ENCODE measurements at regions of chr1 and their contacts with region 1.

Region 1: DNA sequence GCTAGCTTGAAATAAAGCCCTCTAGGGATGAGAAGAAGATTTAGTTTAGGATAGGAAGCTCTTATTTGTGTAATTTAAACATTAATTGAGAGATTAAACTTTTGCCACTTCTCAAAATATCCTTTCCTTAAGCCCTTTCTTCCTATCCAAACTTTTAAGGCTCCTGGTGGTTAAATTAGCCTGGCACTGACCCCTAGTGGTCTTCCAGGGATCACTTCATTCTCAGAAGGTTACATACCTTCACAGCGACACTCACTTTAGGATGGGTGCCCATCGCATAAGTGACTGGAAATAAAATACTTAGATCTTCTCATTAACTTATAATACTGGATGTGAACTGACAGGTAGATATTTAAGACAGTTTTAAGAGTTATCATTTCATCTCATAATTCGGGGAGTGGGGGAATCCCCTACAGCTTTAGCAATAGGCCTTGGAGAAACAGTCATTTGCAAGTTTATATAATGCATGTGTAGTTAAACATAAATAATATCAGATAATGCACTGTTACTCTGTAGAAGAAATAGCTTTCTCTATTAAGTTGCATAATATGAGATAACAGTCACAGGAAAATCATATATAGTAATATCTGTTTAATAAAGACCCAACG is 7.4 kb downstream of the LHX9 start:
- DNase-seq: peak in 5 of 14 experiments; percentile 34 to 73 (median 52)
- ATAC-seq: peak; percentile 77
- H3K4me3 ChIP-seq: no peak overlapping the region
- H3K4me3 Mint-ChIP-seq: no peak overlapping the region
- H3K27ac ChIP-seq: no peak overlapping the region
- H3K27ac Mint-ChIP-seq: no peak overlapping the region
- H3K4me1 ChIP-seq: peaks cover 21% of the 10 kb centered on the region
- H3K4me1 Mint-ChIP-seq: peaks cover 24% of the 10 kb centered on the region
- H3K27me3 ChIP-seq: peaks cover 58 to 73% of the 10 kb centered on the region in 2 experiments
- H3K27me3 Mint-ChIP-seq: peaks cover 92% of the 10 kb centered on the region
- CTCF ChIP-seq: peak; percentile 81

Region 2: DNA sequence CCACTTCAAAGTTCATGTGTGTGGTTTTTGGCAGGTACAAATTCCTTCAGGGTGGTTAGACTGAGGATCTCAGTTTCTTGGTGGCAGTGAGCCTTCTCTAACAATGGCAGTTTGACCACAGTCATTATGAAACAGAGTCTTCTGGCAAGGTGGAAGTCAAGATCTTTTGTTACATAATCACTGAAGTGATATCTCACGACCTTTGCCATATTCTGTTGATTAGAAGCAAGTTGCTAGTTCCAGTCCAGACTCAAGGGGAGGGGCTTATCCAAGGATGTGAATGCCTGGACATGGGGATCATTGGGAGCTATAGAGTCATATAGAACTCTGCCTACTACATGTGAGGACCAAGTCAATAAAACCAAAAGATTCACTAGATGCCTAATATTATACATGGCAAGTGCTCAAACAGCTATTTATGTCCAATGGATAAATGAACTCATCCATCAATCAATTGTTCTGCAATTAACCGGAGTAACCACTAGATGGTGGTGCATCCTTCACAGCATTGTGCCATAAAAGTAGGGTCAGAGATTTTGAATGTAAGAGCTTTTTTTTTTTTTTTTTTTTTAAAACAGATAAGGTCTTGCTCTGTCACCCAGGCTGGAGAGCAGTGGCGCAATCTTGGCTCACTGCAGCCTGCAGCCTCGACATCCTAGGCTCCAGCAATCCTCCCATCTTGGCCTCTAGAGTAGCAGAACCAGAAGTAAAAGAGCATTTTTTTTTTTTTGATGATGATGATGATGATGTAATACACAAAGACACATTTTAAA is 524.7 kb before region 1 on chr1:
- CTCF ChIA-PET with region 1: no interaction called
- POLR2A ChIA-PET with region 1: no interaction called
- intact Hi-C with region 1: loop called (anchors 10 kb)
- DNase-seq: peak in 5 of 14 experiments; percentile 7 to 67 (median 48)
- ATAC-seq: peak; percentile 81
- H3K4me3 ChIP-seq: no peak overlapping the region
- H3K4me3 Mint-ChIP-seq: no peak overlapping the region
- H3K27ac ChIP-seq: no peak overlapping the region
- H3K27ac Mint-ChIP-seq: no peak overlapping the region
- H3K4me1 ChIP-seq: no peaks in the 10 kb centered on the region
- H3K4me1 Mint-ChIP-seq: no peaks in the 10 kb centered on the region
- H3K27me3 ChIP-seq: no peaks in the 10 kb centered on the region
- H3K27me3 Mint-ChIP-seq: peaks cover 15% of the 10 kb centered on the region
- CTCF ChIP-seq: peak; percentile 59

Region 3: GRCh38 chr1:197526736-197527371 is 397.8 kb before region 1 on chr1:
- CTCF ChIA-PET with region 1: interaction called, 3 read pairs
- POLR2A ChIA-PET with region 1: no interaction called
- intact Hi-C with region 1: loop called (anchors 1 to 2 kb)
- DNase-seq: peak in 3 of 14 experiments; percentile 40 to 59 (median 52)
- ATAC-seq: peak; percentile 43
- H3K4me3 ChIP-seq: no peak overlapping the region
- H3K4me3 Mint-ChIP-seq: no peak overlapping the region
- H3K27ac ChIP-seq: no peak overlapping the region
- H3K27ac Mint-ChIP-seq: no peak overlapping the region
- H3K4me1 ChIP-seq: no peaks in the 10 kb centered on the region
- H3K4me1 Mint-ChIP-seq: no peaks in the 10 kb centered on the region
- H3K27me3 ChIP-seq: no peaks in the 10 kb centered on the region
- H3K27me3 Mint-ChIP-seq: no peaks in the 10 kb centered on the region
- CTCF ChIP-seq: peak; percentile 87

Region 4: DNA sequence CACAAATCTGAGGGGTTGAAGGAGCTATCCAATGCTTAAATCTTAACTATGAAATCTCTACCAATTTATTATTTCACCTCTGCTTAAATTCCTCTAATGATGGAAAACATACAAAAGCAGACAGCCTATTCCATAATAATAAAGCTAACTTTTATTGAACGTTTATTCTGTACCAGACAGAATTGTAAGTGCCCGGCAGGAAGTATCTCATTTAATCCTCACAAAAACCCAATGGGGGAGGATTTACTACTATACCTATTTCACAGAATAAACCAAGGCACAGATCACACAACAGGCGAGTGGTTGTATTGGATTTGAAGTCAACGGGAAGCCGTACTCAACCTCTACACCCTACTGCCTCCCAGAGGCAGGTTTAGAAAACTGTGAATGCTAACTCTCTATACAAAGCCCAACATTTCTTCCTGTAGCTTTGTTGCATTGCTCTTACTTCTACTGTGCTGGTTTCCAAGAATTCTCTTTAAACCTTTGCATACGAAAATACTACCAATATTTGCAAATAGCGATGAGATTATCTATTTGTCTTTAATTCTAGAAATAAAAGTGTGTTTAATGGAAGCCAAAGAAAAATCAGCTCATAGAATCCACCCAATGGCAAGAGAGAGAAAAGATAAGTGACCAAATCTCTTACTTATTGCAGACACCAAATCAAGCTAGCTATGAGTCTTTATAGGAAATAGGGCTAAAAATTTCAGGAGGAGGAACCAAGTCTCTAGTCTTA is 55.7 kb before region 1 on chr1:
- CTCF ChIA-PET with region 1: interaction called, 3 read pairs
- POLR2A ChIA-PET with region 1: no interaction called
- intact Hi-C with region 1: loop called in 1 of 2 experiments (anchors 5 kb)
- DNase-seq: peak in 11 of 14 experiments; percentile 2 to 76 (median 25)
- ATAC-seq: peak; percentile 89
- H3K4me3 ChIP-seq: no peak overlapping the region
- H3K4me3 Mint-ChIP-seq: no peak overlapping the region
- H3K27ac ChIP-seq: no peak overlapping the region
- H3K27ac Mint-ChIP-seq: no peak overlapping the region
- H3K4me1 ChIP-seq: no peaks in the 10 kb centered on the region
- H3K4me1 Mint-ChIP-seq: no peaks in the 10 kb centered on the region
- H3K27me3 ChIP-seq: no peaks in the 10 kb centered on the region
- H3K27me3 Mint-ChIP-seq: peaks cover 4% of the 10 kb centered on the region
- CTCF ChIP-seq: peak; percentile 67

Region 5: GRCh38 chr1:198201956-198202784 is 277.6 kb after region 1 on chr1:
- CTCF ChIA-PET with region 1: no interaction called
- POLR2A ChIA-PET with region 1: no interaction called
- intact Hi-C with region 1: no loop called
- DNase-seq: no peak
- ATAC-seq: no peak
- H3K4me3 ChIP-seq: no peak overlapping the region
- H3K4me3 Mint-ChIP-seq: peak overlapping the region; percentile 45
- H3K27ac ChIP-seq: no peak overlapping the region
- H3K27ac Mint-ChIP-seq: no peak overlapping the region
- H3K4me1 ChIP-seq: peaks cover 29% of the 10 kb centered on the region
- H3K4me1 Mint-ChIP-seq: peaks cover 84% of the 10 kb centered on the region
- H3K27me3 ChIP-seq: no peaks in the 10 kb centered on the region
- H3K27me3 Mint-ChIP-seq: no peaks in the 10 kb centered on the region
- CTCF ChIP-seq: no peak

Region 6: DNA sequence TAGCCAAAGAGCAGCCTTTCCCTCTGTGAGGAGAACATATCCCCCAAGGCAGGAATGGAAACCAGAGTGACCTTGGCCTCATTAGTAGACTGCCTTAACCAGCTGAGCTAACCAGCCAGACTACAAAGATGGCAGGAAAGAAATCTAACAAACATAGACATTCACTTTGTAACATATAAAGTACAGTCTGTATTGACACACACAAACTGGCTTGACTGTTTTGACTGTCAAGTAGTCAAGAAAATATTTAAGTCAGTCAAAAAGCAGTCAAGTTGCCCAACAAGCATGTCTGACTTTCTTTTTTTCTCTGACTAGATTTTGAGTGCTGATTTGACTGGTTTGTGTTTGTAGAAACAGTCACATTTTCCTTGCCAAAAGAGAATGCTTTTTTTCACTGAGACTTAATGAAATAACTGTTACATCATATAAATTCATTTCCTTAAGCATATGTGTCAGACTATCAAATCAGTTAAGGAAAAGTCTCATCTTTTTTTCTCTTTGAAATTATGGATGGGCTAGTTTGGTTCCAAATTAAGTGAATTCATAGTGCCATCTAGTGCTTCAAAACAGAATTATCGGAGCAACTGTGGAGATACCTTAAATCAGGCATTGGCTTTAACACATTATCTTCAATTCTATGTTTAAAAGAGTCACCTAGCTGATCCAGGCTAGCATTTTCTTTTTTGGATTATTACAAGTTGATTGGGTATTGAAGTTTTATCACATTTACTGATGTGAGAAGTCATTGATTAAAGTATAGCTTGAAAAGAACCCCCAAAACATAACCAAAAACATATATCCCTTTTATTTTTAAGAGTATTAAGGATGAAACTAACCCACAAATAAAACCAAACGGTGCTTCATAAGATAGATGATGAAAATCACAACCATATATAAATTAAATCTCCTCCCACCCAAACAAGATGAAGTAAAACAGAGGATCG is 540.9 kb after region 1 on chr1:
- CTCF ChIA-PET with region 1: no interaction called
- POLR2A ChIA-PET with region 1: no interaction called
- intact Hi-C with region 1: loop called in 1 of 2 experiments (anchors 5 kb)
- DNase-seq: peak in 3 of 14 experiments; percentile 54 to 64 (median 57)
- ATAC-seq: peak; percentile 60
- H3K4me3 ChIP-seq: no peak overlapping the region
- H3K4me3 Mint-ChIP-seq: no peak overlapping the region
- H3K27ac ChIP-seq: no peak overlapping the region
- H3K27ac Mint-ChIP-seq: no peak overlapping the region
- H3K4me1 ChIP-seq: no peaks in the 10 kb centered on the region
- H3K4me1 Mint-ChIP-seq: no peaks in the 10 kb centered on the region
- H3K27me3 ChIP-seq: no peaks in the 10 kb centered on the region
- H3K27me3 Mint-ChIP-seq: no peaks in the 10 kb centered on the region
- CTCF ChIP-seq: peak; percentile 73

Measured in CD4-positive, alpha-beta T cell (primary cell).